Dendritic cell treated with granulocyte-macrophage colony-stimulating factor and Interleukin-4, amounts not matched to agents 40 ng/mL and 50 ng/mL, for 4 days (primary cell): ENCODE measurements at regions of chr7 and their contacts with region 1.

Region 1: GRCh38 chr7:16933296-16934279 is 51.8 kb upstream of the AGR3 start:
- H3K4me3 Mint-ChIP-seq: peak overlapping the region; percentile 22
- H3K27ac Mint-ChIP-seq: peak overlapping the region; percentile 75
- H3K4me1 Mint-ChIP-seq: peaks cover 62% of the 10 kb centered on the region
- H3K27me3 Mint-ChIP-seq: no peaks in the 10 kb centered on the region

Region 2: GRCh38 chr7:17304926-17305325 is 371.3 kb after region 1 on chr7:
- intact Hi-C with region 1: loop called (anchors 5 kb)
- H3K4me3 Mint-ChIP-seq: peak overlapping the region; percentile 67
- H3K27ac Mint-ChIP-seq: peak overlapping the region; percentile 84
- H3K4me1 Mint-ChIP-seq: peaks cover 6% of the 10 kb centered on the region
- H3K27me3 Mint-ChIP-seq: no peaks in the 10 kb centered on the region

Region 3: GRCh38 chr7:17680943-17681351 is 747.4 kb after region 1 on chr7:
- intact Hi-C with region 1: no loop called
- H3K4me3 Mint-ChIP-seq: no peak overlapping the region
- H3K27ac Mint-ChIP-seq: peak overlapping the region; percentile 82
- H3K4me1 Mint-ChIP-seq: peaks cover 26% of the 10 kb centered on the region
- H3K27me3 Mint-ChIP-seq: no peaks in the 10 kb centered on the region